Naive thymus-derived CD4-positive, alpha-beta T cell (primary cell): ENCODE measurements at regions of chr12 and their contacts with region 1.

Region 1: GRCh38 chr12:46124848-46125619 is 134.7 kb upstream of the SCAF11 start:
- DNase-seq: peak in 7 of 9 donors; percentile 45 to 68 (median 57)
- ATAC-seq: peak; percentile 99
- H3K4me3 ChIP-seq: no peak overlapping the region
- H3K4me3 Mint-ChIP-seq: peak overlapping the region in 9 of 10 donors; percentile 50 to 81 (median 67)
- H3K27ac ChIP-seq: no peak overlapping the region
- H3K27ac Mint-ChIP-seq: peak overlapping the region; percentile 40 to 93 (median 85)
- H3K4me1 ChIP-seq: peaks cover 0 to 3% of the 10 kb centered on the region in 2 donors
- H3K4me1 Mint-ChIP-seq: peaks cover 3 to 7% (median 6%) of the 10 kb centered on the region in 7 donors
- H3K27me3 ChIP-seq: no peaks in the 10 kb centered on the region
- H3K27me3 Mint-ChIP-seq: peaks cover 0 to 45% (median 0%) of the 10 kb centered on the region in 5 donors

Region 2: GRCh38 chr12:45914090-45914489 is 210.9 kb before region 1 on chr12:
- CTCF ChIA-PET with region 1: no interaction called
- POLR2A ChIA-PET with region 1: no interaction called
- intact Hi-C with region 1: no loop called
- DNase-seq: no peak
- ATAC-seq: peak; percentile 36
- H3K4me3 ChIP-seq: no peak overlapping the region
- H3K4me3 Mint-ChIP-seq: no peak overlapping the region
- H3K27ac ChIP-seq: no peak overlapping the region
- H3K27ac Mint-ChIP-seq: peak overlapping the region in 1 of 9 donors; percentile 47
- H3K4me1 ChIP-seq: no peaks in the 10 kb centered on the region
- H3K4me1 Mint-ChIP-seq: no peaks in the 10 kb centered on the region
- H3K27me3 ChIP-seq: no peaks in the 10 kb centered on the region
- H3K27me3 Mint-ChIP-seq: no peaks in the 10 kb centered on the region

Region 3: DNA sequence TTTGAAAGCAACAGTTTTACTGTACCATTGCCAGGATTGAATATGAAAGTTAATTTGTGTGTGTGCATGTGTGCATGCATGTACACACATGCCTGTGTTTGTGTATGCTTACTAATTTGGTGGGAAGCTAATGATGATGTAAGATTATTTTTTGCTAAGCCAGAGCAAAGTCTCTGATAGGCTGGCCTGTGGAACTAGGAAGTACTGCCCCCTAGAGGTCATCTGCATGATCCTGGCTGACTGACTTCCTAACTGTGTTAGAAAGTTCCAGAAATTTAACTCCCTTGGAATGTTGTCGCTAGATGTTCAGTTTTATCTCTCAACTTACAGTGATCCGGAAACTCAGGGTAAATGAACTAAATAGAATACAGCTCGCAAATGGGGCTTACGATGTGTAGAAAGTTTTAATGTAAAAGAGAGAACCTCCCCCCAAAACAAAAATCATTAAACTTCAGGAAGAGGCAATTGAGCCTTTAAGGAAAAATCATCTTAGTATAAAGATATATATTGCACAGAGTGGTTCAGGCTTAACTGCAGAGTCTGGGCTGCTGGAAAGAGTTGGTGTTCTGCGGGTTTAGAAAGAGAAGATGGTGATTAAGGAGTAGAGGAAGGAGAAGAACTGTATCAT is 178.1 kb after region 1 on chr12:
- CTCF ChIA-PET with region 1: interaction called, 70 read pairs
- POLR2A ChIA-PET with region 1: no interaction called
- intact Hi-C with region 1: loop called (anchors 1 kb)
- DNase-seq: peak in 7 of 9 donors; percentile 40 to 66 (median 57)
- ATAC-seq: peak; percentile 91
- H3K4me3 ChIP-seq: no peak overlapping the region
- H3K4me3 Mint-ChIP-seq: no peak overlapping the region
- H3K27ac ChIP-seq: no peak overlapping the region
- H3K27ac Mint-ChIP-seq: peak overlapping the region in 2 of 9 donors; percentile 1 to 7
- H3K4me1 ChIP-seq: no peaks in the 10 kb centered on the region
- H3K4me1 Mint-ChIP-seq: peaks cover 5 to 20% (median 15%) of the 10 kb centered on the region in 7 donors
- H3K27me3 ChIP-seq: no peaks in the 10 kb centered on the region
- H3K27me3 Mint-ChIP-seq: peaks cover 0 to 22% (median 0%) of the 10 kb centered on the region in 5 donors

Region 4: GRCh38 chr12:46933947-46934346 is 808.9 kb after region 1 on chr12:
- CTCF ChIA-PET with region 1: interaction called, 3 read pairs
- POLR2A ChIA-PET with region 1: no interaction called
- intact Hi-C with region 1: loop called (anchors 1 kb)
- DNase-seq: peak in 3 of 9 donors; percentile 2 to 17 (median 15)
- ATAC-seq: no peak
- H3K4me3 ChIP-seq: no peak overlapping the region
- H3K4me3 Mint-ChIP-seq: no peak overlapping the region
- H3K27ac ChIP-seq: no peak overlapping the region
- H3K27ac Mint-ChIP-seq: no peak overlapping the region
- H3K4me1 ChIP-seq: no peaks in the 10 kb centered on the region
- H3K4me1 Mint-ChIP-seq: peaks cover 0 to 6% (median 0%) of the 10 kb centered on the region in 7 donors
- H3K27me3 ChIP-seq: no peaks in the 10 kb centered on the region
- H3K27me3 Mint-ChIP-seq: peaks cover 5 to 32% (median 16%) of the 10 kb centered on the region in 5 donors

Region 5: DNA sequence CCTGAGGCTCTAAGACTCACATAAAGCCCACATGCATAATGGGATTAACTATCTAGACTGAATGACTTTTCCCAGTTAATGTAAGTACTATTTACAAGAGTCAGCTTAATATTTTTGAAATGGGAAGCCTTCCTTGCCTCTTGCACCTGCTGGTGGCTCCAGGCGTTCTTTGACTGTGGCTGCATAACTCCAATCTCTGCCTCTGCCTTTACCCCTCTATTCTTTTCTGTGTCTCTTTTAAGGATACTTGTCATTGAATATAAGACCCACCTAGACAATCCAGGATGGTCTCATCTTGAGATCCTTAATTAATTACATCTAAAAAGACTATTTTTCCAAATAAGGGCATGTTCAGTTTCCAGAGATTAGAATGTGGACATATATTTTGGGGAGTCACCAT is 887.5 kb after region 1 on chr12:
- CTCF ChIA-PET with region 1: no interaction called
- POLR2A ChIA-PET with region 1: no interaction called
- intact Hi-C with region 1: loop called in 1 of 2 experiments (anchors 1 kb)
- DNase-seq: no peak
- ATAC-seq: no peak
- H3K4me3 ChIP-seq: no peak overlapping the region
- H3K4me3 Mint-ChIP-seq: no peak overlapping the region
- H3K27ac ChIP-seq: no peak overlapping the region
- H3K27ac Mint-ChIP-seq: no peak overlapping the region
- H3K4me1 ChIP-seq: no peaks in the 10 kb centered on the region
- H3K4me1 Mint-ChIP-seq: no peaks in the 10 kb centered on the region
- H3K27me3 ChIP-seq: no peaks in the 10 kb centered on the region
- H3K27me3 Mint-ChIP-seq: peaks cover 4 to 25% (median 15%) of the 10 kb centered on the region in 5 donors